A673 (cell line): ENCODE measurements at regions of chr5 and their contacts with region 1.

Region 1: DNA sequence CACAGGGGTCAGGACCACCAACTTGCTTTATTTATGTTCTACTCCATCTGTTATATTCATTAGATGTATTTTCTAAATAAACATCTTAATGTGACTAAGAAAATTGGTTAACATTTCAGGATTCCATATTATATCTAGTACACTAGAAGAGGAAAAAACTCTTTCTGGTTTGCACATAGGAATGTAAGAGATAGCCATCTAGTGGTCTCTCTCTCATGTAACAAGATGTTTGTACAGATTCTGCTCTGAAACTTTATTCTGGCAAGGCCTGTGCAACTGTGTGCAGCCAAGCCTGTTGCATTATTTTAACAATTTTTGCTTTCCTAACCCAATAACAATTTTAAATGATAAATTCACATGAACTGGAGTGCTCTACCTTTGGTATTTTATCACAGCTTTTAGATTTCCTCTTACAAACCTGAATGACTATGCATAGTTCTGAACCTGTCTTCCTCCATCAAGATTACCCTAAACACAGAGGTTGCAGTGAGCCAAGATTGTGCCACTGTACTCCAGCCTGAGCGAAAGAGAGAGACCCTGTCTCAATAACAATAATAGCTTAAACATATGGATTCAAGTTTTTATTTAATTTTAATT is 148.1 kb downstream of the GIN1 start:
- DNase-seq: peak; percentile 68
- H3K4me3 ChIP-seq: no peak overlapping the region
- H3K27ac ChIP-seq: no peak overlapping the region
- H3K4me1 ChIP-seq: peaks cover 42% of the 10 kb centered on the region
- H3K27me3 ChIP-seq: no peaks in the 10 kb centered on the region
- CTCF ChIP-seq: peak; percentile 70

Region 2: DNA sequence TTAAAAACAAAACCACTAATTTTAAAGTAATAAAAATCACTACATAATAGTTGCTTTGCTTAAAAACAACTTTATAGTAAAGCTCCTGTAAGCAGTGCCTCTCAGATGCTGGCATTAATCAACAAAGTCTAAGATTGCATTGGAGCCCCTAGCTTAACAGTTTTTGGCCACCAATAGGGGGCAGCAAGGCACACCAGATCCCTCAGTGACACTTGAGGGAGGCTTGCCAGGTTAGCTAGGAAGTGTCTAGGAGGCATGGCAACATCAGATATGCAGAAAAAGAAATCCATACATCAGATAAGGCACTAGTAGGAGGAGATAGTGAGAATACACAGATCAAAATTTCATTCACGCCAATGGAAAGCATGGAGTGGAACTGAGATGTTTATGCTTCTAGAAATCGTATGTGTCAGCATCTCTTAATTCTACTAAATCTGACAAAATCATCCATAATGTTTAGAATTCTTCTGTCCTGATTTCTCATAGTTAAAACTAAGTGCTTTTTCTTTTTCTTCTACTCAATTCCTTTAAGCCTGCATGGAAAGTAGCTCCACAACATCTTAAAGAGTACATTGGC is 290.3 kb before region 1 on chr5:
- CTCF ChIA-PET with region 1: no interaction called
- POLR2A ChIA-PET with region 1: no interaction called
- intact Hi-C with region 1: loop called (anchors 5 kb)
- DNase-seq: peak; percentile 90
- H3K4me3 ChIP-seq: no peak overlapping the region
- H3K27ac ChIP-seq: no peak overlapping the region
- H3K4me1 ChIP-seq: no peaks in the 10 kb centered on the region
- H3K27me3 ChIP-seq: no peaks in the 10 kb centered on the region
- CTCF ChIP-seq: peak; percentile 97

Region 3: GRCh38 chr5:102778478-102778877 is 193.3 kb before region 1 on chr5:
- CTCF ChIA-PET with region 1: interaction called, 3 read pairs
- POLR2A ChIA-PET with region 1: no interaction called
- intact Hi-C with region 1: loop called (anchors 2 kb)
- DNase-seq: no peak
- H3K4me3 ChIP-seq: no peak overlapping the region
- H3K27ac ChIP-seq: peak overlapping the region; percentile 7
- H3K4me1 ChIP-seq: peaks cover 37% of the 10 kb centered on the region
- H3K27me3 ChIP-seq: no peaks in the 10 kb centered on the region
- CTCF ChIP-seq: no peak

Region 4: DNA sequence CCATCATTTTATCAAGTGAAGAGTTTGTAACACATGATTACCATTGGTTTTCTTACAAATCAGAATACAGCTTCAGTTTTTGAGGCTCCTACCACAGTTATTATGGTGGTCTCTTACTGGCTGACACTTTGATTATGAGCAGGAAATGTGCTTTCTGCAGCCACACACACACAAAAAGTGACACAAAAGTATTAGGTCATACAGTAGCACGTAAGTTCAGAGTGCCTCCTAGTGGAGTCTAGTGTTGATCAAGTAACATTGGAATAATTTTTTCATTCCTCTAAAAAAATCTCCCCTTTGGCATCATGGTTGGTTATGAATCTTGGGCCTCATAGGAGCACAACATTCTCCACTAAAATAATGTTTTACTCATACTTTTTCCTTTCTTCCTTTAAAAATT is 179.1 kb before region 1 on chr5:
- CTCF ChIA-PET with region 1: no interaction called
- POLR2A ChIA-PET with region 1: no interaction called
- intact Hi-C with region 1: loop called (anchors 5 kb)
- DNase-seq: peak; percentile 61
- H3K4me3 ChIP-seq: no peak overlapping the region
- H3K27ac ChIP-seq: no peak overlapping the region
- H3K4me1 ChIP-seq: peaks cover 59% of the 10 kb centered on the region
- H3K27me3 ChIP-seq: no peaks in the 10 kb centered on the region
- CTCF ChIP-seq: peak; percentile 55